ENCODE measurements at regions of chr12 and their contacts with region 1.

Region 1: DNA sequence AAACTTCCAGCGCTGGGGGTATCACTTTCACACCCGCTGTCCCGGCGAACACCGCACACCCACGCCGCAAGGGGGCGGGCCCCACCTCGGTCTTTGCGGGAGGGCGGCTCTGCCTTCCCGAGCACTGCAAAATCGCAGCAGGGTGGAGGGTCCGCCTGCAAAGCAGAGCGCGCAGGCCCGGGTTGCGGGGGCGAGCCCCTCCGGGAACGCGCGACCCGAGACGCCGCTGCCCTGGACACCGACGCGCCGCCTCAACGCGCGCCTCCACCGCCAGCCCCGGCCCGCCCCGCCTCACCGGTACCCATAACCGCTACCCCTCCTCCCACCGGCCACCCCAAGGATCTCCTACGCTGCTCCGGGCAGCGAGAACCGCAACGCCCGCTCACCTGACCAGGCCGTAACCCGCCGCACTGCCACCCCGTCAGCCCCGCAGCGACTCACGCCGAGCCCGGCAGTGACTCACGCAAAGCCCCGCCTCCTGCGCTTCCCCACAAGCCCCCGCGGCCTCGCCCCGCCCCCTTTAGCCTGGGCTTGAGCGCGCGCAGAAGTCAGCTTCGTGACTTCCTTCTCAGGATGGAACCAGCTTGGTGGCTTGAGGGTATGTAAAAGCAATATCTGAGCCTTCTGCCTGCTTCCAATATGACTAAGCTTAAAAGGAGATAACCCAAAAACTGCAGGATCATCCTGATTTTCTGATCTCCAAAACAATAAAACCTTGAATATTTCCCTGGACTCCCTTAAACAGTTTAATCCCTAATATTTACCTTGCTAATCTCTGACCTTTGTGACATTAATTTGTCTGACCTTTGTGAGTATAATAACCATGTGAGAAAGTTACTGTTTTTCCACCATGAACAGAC is at the start of gene RPAP3:
- DNase-seq: peak; percentile 100
- ATAC-seq: peak; percentile 92
- H3K4me3 Mint-ChIP-seq: peak within 1 kb of the TSS; percentile 89
- H3K27ac Mint-ChIP-seq: peak within 1 kb of the TSS; percentile 99
- H3K4me1 Mint-ChIP-seq: peaks cover 46% of the 10 kb centered on the region
- H3K27me3 Mint-ChIP-seq: no peaks in the 10 kb centered on the region
- total RNA-seq, gene RPAP3: 55.3 to 62.8 TPM

Region 2: DNA sequence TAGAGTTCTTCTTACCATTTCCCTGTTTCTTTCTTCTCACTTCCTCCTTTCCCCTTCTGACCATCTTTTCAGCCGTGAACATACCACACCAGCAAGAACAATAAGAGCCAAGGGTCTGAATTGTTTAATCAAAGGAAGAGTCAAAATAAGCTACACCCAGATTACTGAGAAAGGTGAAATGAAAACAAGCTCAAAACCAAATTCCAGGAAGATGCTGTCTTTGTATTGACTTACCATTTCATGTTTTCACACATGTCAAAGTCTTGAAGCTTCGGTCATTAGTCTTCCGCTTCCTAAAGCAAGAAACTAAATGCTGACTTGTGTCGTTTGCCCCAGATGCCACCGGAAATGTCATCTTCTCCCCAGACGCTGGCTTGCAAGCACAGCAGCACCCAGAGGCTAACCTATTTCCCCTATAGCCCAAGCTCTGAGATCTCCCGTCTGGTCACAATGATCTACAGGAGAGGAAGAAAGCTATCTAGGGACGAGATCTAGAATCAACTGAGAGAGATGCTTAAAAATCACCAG is 489.6 kb before region 1 on chr12:
- CTCF ChIA-PET with region 1: no interaction called
- POLR2A ChIA-PET with region 1: no interaction called
- intact Hi-C with region 1: loop called in 1 of 2 experiments (anchors 10 kb)
- DNase-seq: peak; percentile 81
- ATAC-seq: peak; percentile 43
- H3K4me3 Mint-ChIP-seq: peak overlapping the region; percentile 89
- H3K27ac Mint-ChIP-seq: peak overlapping the region; percentile 96
- H3K4me1 Mint-ChIP-seq: peaks cover 38% of the 10 kb centered on the region
- H3K27me3 Mint-ChIP-seq: no peaks in the 10 kb centered on the region

Region 3: DNA sequence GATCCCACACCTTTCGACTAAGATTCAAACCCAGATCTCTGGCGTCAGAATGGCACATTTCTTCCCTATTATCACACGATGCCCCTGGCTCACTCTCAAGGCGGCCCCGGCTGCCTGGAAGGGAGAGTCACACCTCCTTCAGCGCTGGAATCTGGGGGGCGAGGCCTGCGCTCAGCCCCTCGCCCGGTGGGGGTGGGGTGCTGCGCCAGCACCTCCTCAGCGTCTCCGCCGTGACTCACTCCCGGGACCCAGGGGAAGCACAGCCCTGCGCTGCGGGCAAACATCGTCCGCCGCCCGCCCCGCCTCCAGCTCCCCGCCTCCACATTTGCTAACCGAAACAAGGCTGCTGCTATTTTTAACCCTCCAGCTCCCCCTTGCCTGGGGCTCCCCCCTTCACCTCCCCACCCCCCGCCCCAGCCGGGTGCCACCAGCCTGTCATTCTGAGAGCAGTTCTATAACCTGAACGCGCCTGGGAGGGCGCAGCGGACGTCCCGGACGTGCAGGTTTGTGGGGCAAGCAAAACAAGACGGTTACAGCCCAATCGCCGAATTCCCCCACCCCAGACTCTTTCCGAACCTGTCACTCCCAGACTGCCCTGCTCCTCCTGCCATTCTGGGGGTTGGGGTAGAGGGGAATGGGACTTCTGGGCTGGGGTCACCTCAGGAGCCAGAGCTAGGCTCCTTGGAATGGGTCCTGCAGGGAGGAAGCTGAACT is 107.2 kb after region 1 on chr12:
- CTCF ChIA-PET with region 1: interaction called, 7 read pairs
- POLR2A ChIA-PET with region 1: interaction called, 4 read pairs
- intact Hi-C with region 1: loop called (anchors 1 kb)
- DNase-seq: peak; percentile 98
- ATAC-seq: peak; percentile 59
- H3K4me3 Mint-ChIP-seq: peak overlapping the region; percentile 94
- H3K27ac Mint-ChIP-seq: peak overlapping the region; percentile 98
- H3K4me1 Mint-ChIP-seq: peaks cover 81% of the 10 kb centered on the region
- H3K27me3 Mint-ChIP-seq: no peaks in the 10 kb centered on the region

Region 4: DNA sequence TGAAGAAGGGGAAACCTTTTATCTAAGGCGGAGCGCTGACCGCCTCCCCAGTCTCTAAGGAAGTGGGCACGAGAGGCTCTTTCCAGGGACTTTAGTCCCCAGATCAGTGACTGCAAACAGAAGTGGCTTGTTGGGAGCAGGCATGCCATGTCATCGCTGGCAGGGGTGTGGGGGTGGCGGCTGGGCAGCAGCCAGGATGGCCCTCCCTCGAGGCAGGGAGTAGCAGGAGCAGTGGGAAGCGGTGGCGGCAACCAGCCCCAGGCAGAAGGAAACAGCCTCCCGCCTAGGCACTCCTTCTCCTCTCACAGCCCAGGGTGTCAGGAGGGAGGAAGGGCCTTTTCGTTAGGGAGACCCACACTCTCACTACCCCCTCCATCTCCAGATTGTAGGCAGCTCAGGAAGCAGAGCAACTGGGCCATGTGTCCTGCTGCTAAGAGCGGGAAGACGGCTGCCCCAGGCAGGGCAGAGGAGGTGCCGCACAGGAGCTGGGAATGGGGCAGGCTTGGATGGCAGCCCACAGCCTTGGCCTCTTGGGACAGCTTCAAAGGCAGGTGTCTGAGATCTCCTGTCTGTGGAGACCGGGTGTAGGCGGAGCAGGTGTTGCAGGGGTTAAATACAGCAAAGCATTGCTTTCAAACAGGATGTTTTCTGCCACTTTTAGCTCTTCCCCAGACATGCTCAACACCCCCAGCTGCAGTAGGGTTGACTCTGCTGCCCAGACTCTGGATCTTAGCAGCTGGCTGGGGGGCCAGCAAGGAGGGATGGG is 177.2 kb after region 1 on chr12:
- CTCF ChIA-PET with region 1: no interaction called
- POLR2A ChIA-PET with region 1: no interaction called
- intact Hi-C with region 1: loop called in 1 of 2 experiments (anchors 1 kb)
- DNase-seq: peak; percentile 70
- ATAC-seq: peak; percentile 14
- H3K4me3 Mint-ChIP-seq: peak overlapping the region; percentile 78
- H3K27ac Mint-ChIP-seq: peak overlapping the region; percentile 97
- H3K4me1 Mint-ChIP-seq: peaks cover 81% of the 10 kb centered on the region
- H3K27me3 Mint-ChIP-seq: no peaks in the 10 kb centered on the region

Region 5: DNA sequence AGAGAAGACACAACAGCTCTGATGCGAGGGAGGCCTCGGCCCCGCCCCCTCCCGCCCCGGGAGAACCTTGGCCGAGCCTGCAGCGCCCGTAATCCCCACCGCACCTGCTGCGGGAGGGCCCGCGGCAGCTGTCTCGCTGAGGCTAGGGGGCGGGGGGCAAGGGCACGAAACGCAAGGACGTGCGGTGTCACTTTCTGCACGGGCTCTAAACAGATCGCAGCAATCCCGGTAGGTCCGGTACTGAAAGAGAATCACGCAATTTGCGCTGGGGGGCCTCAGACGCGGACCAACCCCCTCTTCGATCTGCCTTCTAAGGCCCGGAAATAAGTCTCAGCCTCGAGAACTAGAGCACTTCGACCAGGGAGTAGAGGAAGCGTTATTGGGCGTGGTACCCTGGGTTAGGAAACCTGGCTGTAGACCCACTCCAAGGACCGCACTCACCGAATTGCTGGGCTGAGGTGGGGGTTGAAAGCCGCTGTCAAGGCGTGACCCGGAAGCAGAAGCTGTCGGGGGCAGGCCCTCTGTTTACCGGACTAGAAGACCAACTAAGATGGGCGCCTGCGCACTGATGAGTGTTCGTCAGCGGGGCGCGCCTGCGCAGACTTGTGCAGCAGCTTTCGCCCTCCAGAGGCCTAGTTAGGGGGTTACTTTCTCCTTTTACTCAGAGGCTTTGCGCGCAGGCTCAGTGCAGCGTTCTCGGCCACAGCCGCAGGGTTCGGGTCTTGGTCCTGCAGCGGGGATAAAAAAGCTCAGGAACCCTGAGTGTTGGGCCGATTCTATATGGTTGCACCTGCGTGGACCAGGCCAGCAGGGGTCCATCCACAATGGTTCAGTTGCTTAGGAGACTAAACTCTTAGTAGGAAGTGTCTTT is 451.5 kb after region 1 on chr12 and contains the start of gene ASB8:
- CTCF ChIA-PET with region 1: no interaction called
- POLR2A ChIA-PET with region 1: no interaction called
- intact Hi-C with region 1: loop called in 1 of 2 experiments (anchors 1 kb)
- DNase-seq: peak; percentile 100
- ATAC-seq: peak; percentile 96
- H3K4me3 Mint-ChIP-seq: peak within 1 kb of the TSS; percentile 88
- H3K27ac Mint-ChIP-seq: peak within 1 kb of the TSS; percentile 94
- H3K4me1 Mint-ChIP-seq: peaks cover 40% of the 10 kb centered on the region
- H3K27me3 Mint-ChIP-seq: no peaks in the 10 kb centered on the region
- total RNA-seq, gene ASB8: 28.8 to 33.0 TPM